Heart right ventricle (tissue), 16 donors: ENCODE measurements at regions of chr11 and their contacts with region 1.

Region 1: DNA sequence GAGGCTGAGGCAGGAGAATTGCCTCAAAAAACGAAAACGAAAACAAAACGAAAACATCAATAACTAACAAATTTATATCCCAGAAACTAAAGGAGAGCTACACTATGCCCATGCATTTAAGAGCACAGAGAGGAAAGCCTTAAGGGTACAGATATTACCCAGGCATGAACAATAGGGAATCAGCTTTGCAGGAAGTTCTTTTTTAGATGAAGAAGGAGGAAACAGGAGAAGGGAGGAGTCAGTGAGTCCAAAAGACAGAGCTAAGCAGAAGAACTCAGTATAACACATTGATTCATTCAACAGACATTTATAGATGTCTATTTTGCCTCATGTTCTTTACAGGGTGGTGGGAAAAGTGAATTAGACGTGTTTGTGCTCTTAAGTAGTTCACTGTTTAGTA is 8.3 kb downstream of the MRPL17 start:
- DNase-seq: no peak
- ATAC-seq: peak in 7 of 8 donors; percentile 54 to 76 (median 66)
- H3K4me3 ChIP-seq: no peak overlapping the region
- H3K27ac ChIP-seq: peak overlapping the region in 9 of 10 donors; percentile 36 to 82 (median 60)
- H3K4me1 ChIP-seq: peaks cover 0 to 27% (median 10%) of the 10 kb centered on the region in 9 donors
- H3K27me3 ChIP-seq: no peaks in the 10 kb centered on the region
- CTCF ChIP-seq: no peak

Region 2: DNA sequence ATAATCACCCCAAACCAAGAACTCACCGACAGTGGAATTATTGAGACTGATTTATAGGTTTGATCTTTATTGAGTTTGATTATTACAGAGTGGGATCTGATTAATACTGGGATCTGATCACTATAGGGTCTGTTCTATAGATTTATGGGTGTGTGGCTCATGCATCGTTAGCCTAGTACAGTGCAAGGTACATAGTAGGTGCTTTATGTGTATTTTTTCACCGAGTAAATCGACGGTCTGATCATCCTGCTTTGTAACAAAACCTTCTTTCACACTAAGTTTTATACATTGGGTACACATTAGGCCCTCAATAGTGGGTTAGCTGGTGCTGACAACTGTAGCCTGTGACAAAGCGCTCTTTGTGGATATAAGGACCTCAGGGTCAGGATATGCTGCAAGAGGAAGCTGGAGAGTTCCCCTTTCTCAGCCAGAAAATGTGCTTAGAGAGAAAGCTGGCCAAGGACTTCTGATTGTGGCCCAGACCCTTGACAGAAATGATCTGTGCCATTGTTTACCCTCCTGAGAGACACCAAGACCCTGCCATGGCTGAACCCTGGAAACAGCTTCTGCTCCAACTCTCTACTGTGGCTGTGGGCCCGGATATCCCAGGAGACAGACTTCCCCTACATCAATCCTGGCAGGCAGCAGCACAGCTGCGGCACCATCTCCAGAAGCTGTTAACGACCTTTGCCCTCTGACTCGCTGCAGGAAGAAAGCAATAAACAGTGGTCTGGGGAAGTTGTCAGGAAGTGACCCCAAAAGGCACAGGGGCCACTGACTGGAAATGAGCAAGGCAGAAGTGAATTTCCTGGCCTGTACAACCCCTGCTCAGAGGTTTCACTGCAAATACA is 39.6 kb before region 1 on chr11:
- intact Hi-C with region 1: loop called in 1 of 10 experiments (anchors 5 kb)
- DNase-seq: peak; percentile 58 to 81
- ATAC-seq: peak; percentile 53 to 75 (median 66)
- H3K4me3 ChIP-seq: no peak overlapping the region
- H3K27ac ChIP-seq: peak overlapping the region; percentile 10 to 87 (median 75)
- H3K4me1 ChIP-seq: peaks cover 8 to 74% (median 65%) of the 10 kb centered on the region in 9 donors
- H3K27me3 ChIP-seq: no peaks in the 10 kb centered on the region
- CTCF ChIP-seq: no peak